ENCODE measurements at regions of chr6 and their contacts with region 1.

Region 1: DNA sequence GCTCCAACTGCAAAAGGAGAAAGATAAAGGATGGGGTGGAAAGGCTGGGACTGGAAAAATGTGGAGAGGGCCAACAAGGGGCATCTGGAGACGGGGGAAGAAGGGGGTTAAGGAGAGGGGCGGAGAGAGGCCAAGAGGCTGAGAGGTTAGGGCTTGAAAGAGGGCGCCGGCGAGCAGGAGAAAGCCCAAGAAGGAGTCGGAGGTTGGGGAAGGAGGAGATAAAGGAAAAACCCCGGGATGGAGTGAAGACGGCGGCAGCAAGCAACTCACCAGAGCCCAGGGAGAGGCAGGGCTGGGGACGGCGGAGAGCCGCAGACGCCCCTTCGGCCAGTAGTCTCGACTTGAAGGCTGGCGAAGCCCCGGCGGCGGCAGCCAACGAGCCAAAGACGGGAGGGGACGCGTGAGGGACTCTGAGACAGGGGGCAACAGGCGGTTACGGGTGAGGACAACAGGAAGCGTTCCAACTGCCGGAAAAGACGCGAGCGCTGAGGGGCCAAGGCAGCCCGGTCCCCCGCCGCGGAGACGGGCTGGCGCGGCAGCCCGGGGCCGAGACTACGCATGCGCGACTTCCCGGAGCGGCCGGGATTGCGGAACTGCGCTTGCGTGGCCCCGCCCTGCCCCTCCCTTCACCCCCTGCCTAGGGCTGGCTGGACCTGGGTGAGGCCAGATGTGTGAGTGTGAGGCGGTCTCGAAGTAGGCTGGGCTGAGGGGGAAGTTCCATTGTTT is at the start of gene STK38:
- DNase-seq: peak; percentile 98
- H3K4me3 ChIP-seq: peak within 1 kb of the TSS; percentile 63 to 93 (median 78)
- H3K27ac ChIP-seq: peak within 1 kb of the TSS; percentile 86 to 97 (median 94)
- H3K4me1 ChIP-seq: peaks cover 35 to 69% (median 48%) of the 10 kb centered on the region in 6 donors
- H3K27me3 ChIP-seq: no peaks in the 10 kb centered on the region
- CTCF ChIP-seq: peak in 1 of 11 experiments; percentile 18
- POLR2A ChIP-seq: peak in 2 of 3 donors; percentile 82 to 95
- total RNA-seq, gene STK38: 30.5 to 51.8 (median 38.7) TPM

Region 2: GRCh38 chr6:36594029-36594815 is 47.1 kb after region 1 on chr6 and contains the start of gene SRSF3:
- intact Hi-C with region 1: loop called (anchors 10 kb)
- DNase-seq: peak; percentile 99
- H3K4me3 ChIP-seq: peak within 1 kb of the TSS; percentile 63 to 86 (median 72)
- H3K27ac ChIP-seq: peak within 1 kb of the TSS; percentile 92 to 100 (median 98)
- H3K4me1 ChIP-seq: peaks cover 29 to 59% (median 49%) of the 10 kb centered on the region in 6 donors
- H3K27me3 ChIP-seq: no peaks in the 10 kb centered on the region
- CTCF ChIP-seq: peak; percentile 47 to 87 (median 77)
- POLR2A ChIP-seq: peak; percentile 95 to 98 (median 96)
- total RNA-seq, gene SRSF3: 93.8 to 271 (median 215) TPM

Region 3: DNA sequence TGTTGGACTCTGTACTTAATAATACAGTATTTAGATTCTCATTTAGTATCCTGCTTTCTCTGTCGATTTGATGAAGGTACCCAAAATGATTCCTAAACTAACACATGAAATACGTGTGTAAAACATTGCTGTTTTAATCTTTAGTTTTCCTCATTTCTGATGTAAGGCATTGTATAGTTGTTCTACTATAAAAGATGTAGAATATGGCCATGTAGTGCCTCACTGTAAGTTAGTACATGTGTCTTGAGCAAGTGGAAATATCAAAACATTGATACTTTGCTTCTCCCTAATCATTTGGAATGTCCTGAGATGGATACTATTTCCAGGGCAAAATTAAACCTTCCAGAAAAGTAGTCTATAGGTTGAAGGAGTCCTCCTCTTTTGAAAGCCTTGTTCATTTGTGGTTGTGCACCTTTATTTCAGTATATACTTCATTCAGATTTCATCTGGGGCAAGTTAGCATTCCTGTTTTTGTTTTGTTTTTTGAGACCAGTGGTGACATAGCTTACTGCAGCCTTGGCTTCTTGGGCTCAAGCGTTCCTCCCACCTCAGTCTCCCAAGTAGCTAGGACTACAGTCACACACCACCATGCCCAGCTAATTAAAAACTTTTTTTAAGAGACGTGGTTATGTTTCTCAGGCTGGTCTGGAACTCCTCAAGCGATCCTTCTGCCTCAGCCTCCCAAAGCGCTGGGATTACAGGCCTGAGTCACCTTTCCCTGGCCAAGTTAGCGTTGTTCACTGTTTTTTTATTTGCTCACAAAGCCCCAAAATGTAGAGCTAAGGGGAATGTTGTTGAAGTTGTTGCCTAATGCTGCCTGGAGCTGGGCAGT is 58.7 kb after region 1 on chr6:
- intact Hi-C with region 1: no loop called
- DNase-seq: no peak
- H3K4me3 ChIP-seq: no peak overlapping the region
- H3K27ac ChIP-seq: peak overlapping the region in 5 of 8 donors; percentile 14 to 42 (median 23)
- H3K4me1 ChIP-seq: peaks cover 28 to 100% (median 92%) of the 10 kb centered on the region in 6 donors
- H3K27me3 ChIP-seq: no peaks in the 10 kb centered on the region
- CTCF ChIP-seq: peak in 2 of 11 experiments; percentile 8 to 9
- POLR2A ChIP-seq: no peak